ENCODE measurements at regions of chr3 and their contacts with region 1.

Region 1: GRCh38 chr3:16247276-16248061 is 17.3 kb downstream of the DPH3 start:
- DNase-seq: peak; percentile 70
- H3K4me3 Mint-ChIP-seq: no peak overlapping the region
- H3K27ac Mint-ChIP-seq: no peak overlapping the region
- H3K4me1 Mint-ChIP-seq: peaks cover 32% of the 10 kb centered on the region
- H3K27me3 Mint-ChIP-seq: peaks cover 2% of the 10 kb centered on the region

Region 2: DNA sequence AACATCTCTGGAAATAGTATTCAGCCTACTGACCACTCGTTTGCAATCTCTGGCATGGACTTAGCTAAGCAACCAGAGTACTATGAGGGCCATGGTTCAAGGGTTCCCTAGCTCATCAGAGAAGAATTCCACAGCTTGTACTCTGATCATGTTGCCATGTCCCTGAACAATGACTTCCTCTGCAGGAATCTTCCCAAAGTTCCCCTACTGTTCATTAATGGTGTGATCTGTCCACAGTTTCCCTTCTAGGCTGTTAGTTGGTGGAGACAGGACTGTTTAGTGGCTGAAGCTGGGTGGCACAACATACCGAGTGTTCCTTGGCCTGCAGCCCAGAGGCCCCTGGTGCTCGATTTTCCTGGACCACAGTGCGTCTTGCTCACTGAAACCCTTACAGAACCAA is 117.4 kb before region 1 on chr3:
- intact Hi-C with region 1: no loop called
- DNase-seq: no peak
- H3K4me3 Mint-ChIP-seq: no peak overlapping the region
- H3K27ac Mint-ChIP-seq: no peak overlapping the region
- H3K4me1 Mint-ChIP-seq: no peaks in the 10 kb centered on the region
- H3K27me3 Mint-ChIP-seq: peaks cover 2% of the 10 kb centered on the region

Region 3: DNA sequence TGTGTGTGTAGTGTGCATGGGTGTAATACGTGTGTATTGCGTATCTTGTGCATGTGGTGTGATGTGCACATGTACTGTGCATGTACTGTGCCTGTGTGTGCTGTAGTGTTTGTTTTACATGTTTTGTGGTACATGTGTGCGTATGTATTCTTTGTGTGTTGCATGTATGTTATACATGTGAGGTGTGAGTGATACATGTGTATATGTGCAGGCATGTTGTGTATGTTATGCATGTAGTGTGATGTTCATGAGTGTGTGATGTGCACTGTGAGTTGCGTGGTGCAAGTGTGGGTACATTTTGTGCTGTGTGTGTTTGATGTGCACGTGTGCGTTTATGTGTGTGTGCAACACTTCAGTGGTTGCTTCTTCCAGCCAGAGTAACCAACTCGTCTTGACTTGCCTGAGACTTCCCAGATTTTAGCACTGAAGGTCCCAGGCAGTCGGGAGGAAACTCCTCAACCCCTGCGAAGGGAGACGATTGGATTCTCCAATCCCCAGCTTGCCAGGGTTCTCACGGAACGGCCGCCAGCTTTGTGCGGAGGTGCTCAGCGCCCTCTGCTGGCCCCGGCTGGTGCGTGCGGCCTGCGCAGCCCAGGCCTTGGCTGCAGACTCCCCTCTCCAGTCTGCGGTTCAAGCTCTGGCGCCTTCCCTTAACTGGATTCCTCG is 69.4 kb before region 1 on chr3:
- intact Hi-C with region 1: loop called (anchors 1 kb)
- DNase-seq: peak; percentile 45
- H3K4me3 Mint-ChIP-seq: no peak overlapping the region
- H3K27ac Mint-ChIP-seq: no peak overlapping the region
- H3K4me1 Mint-ChIP-seq: no peaks in the 10 kb centered on the region
- H3K27me3 Mint-ChIP-seq: peaks cover 2% of the 10 kb centered on the region

Region 4: DNA sequence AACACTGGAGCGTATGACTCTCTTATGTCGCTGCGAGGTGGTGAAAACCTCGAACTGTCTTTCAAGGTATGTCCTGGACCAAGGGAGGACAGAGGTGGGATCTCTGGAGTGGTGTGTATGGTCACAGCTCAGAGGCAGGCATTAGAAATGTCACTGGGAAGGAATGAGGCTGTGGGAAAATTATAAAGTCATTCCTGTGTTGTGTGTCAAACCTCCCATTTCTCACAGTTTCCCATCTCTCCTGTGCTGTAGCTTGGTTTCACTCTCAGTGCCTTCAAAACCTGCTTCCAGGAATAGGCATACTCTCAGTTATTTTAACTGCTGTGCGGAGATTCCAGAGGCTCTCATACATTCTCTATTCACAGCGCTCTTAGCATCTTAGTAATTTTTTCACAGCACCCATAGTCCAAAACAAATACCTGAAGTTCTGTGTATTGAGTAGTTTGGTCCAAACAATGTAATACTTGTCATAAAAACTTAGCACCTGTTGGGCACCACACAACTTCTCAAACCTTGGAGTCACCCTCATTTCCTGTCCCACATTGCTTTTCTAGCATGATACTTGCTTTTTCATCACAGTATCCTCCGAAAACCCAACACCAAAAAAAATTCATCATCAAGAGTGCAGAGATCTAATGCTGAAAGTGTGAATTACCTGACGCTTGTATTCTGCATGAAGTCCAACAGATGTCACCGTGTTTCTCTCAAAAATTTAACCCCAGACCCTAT is 36.1 kb before region 1 on chr3:
- intact Hi-C with region 1: loop called (anchors 5 kb)
- DNase-seq: no peak
- H3K4me3 Mint-ChIP-seq: no peak overlapping the region
- H3K27ac Mint-ChIP-seq: no peak overlapping the region
- H3K4me1 Mint-ChIP-seq: no peaks in the 10 kb centered on the region
- H3K27me3 Mint-ChIP-seq: no peaks in the 10 kb centered on the region

Region 5: DNA sequence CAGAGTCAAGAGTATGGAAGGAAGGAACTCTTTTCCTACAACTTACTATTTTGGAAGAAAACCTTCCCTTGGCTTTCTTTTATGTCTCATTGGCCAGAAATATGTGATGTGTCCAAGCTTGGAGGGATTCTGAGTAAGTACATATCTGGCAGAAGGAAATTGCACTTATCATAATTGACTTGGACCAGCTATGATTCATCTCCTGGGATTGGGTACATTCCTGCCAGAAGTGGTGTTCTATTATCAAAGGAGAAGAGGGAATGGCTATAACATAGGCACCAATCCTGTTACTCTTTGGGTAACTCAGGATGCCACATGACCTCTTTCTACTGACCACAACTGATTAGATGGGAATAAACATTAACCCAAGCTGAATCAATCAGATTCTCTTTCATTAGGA is 371.3 kb after region 1 on chr3:
- intact Hi-C with region 1: no loop called
- DNase-seq: no peak
- H3K4me3 Mint-ChIP-seq: no peak overlapping the region
- H3K27ac Mint-ChIP-seq: no peak overlapping the region
- H3K4me1 Mint-ChIP-seq: no peaks in the 10 kb centered on the region
- H3K27me3 Mint-ChIP-seq: peaks cover 5% of the 10 kb centered on the region

Measured in activated T-helper 1 cell treated with anti-CD3 and anti-CD28 coated beads, Interleukin-12 subunit alpha, Interleukin-12 subunit beta, Interleukin-2, Interleukin-4 antibody, amounts not matched to agents 30 ng/mL and 10 ng/mL and 1 ng/mL, durations not matched to agents 14 hours and 24 hours and 36 hours (primary cell).